ENCODE measurements at regions of chr3 and their contacts with region 1.

Region 1: DNA sequence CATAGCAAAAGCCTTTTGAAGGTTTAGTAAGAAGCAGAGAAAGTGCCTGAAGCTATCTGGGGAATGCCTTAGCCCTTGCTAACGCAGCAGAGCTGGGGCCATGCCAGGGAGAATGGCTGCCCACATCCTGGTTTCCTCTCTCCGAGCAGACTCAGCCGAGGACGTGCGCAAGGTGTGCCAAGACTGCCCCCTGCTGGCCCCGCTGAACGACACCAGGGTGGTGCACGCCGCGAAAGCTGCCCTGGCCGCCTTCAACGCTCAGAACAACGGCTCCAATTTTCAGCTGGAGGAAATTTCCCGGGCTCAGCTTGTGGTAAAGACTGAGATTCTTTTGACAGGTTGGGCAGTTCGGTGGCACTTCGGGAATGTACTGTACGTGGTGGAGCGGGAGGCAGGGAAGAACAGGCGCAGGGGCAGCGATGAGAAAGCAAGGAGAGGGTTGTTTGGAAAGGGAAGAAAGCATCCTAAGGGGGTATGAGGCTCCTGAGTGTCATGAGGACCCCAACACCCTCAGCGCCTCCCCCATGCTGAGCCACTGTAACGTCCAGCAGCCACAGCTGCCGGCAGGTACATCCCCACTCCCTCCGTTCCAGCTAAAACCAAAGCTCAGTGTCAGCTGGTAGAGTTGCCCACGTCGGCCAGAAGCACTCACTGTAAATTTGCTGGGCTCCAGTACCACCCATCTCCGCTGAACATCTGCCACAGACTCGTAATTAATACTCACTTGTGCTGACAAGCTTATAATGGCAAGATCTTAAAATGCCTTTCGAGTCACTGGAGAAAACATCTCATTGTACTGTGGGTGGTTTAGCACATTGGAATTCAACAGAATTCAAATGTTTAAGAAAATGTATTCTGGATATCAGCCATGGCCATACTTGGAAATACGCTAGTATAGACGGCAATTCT is 4.4 kb downstream of the AHSG start:
- DNase-seq: peak; percentile 97
- H3K4me3 Mint-ChIP-seq: peak overlapping the region; percentile 56
- H3K27ac Mint-ChIP-seq: peak overlapping the region; percentile 81
- H3K4me1 Mint-ChIP-seq: peaks cover 18% of the 10 kb centered on the region
- H3K27me3 Mint-ChIP-seq: peaks cover 16% of the 10 kb centered on the region

Region 2: DNA sequence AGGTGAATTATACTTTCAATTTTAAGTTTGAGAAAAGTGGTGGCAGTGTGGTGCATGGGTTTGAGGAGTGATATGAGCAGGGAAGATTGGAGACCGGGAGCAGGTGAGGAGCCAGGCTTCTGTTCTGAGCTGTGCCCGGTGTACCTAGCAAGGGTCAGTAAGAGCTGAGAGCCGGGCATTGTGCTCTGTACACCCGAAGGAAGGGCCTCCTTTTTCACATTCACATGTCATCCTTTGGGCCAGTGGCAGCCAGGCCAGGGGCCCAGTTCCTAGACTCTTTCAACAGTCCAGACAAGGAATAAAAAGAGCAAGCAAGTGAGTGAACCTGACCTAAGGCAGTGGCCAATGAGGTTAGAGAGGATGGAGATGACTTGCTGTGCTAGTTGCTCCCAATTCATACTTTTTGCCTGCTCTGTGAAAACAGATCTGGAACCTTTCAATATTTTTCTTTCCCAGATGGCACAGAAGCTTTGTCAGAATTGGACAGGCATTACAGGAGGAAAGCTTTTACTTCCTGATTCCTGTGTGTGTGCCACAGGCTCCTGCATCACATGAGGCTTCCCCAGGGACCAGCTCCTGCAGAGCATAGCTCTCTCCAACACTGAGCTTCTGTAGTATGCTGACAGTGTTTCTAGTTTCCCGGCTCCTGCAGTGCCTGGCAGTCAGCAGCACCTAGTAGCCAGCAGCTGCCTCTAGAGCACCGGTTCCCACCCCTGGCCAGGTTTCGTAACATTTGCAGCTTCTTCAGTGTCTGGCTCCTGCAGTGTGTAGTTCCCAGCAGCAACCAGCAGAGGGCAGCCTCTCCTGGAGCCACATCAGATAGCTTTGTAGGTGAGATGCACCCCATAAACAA is 674.2 kb before region 1 on chr3:
- CTCF ChIA-PET with region 1: interaction called, 29 read pairs
- intact Hi-C with region 1: loop called (anchors 2 kb)
- DNase-seq: peak; percentile 92
- H3K4me3 Mint-ChIP-seq: peak overlapping the region; percentile 28
- H3K27ac Mint-ChIP-seq: no peak overlapping the region
- H3K4me1 Mint-ChIP-seq: peaks cover 17% of the 10 kb centered on the region
- H3K27me3 Mint-ChIP-seq: no peaks in the 10 kb centered on the region

Region 3: GRCh38 chr3:186241910-186242821 is 375.1 kb before region 1 on chr3:
- CTCF ChIA-PET with region 1: interaction called, 6 read pairs
- intact Hi-C with region 1: loop called (anchors 5 kb)
- DNase-seq: peak; percentile 87
- H3K4me3 Mint-ChIP-seq: peak overlapping the region; percentile 17
- H3K27ac Mint-ChIP-seq: no peak overlapping the region
- H3K4me1 Mint-ChIP-seq: peaks cover 7% of the 10 kb centered on the region
- H3K27me3 Mint-ChIP-seq: peaks cover 7% of the 10 kb centered on the region

Region 4: GRCh38 chr3:186570096-186570940 is 47.0 kb before region 1 on chr3 and contains the start of gene DNAJB11:
- CTCF ChIA-PET with region 1: interaction called, 12 read pairs
- intact Hi-C with region 1: loop called (anchors 1 kb)
- DNase-seq: peak; percentile 100
- H3K4me3 Mint-ChIP-seq: peak within 1 kb of the TSS; percentile 95
- H3K27ac Mint-ChIP-seq: peak within 1 kb of the TSS; percentile 85
- H3K4me1 Mint-ChIP-seq: peaks cover 53% of the 10 kb centered on the region
- H3K27me3 Mint-ChIP-seq: no peaks in the 10 kb centered on the region
- total RNA-seq, gene DNAJB11: 30.0 to 30.5 TPM

Region 5: GRCh38 chr3:186640473-186640818 is 23.2 kb after region 1 on chr3:
- CTCF ChIA-PET with region 1: interaction called, 11 read pairs
- intact Hi-C with region 1: loop called (anchors 1 kb)
- DNase-seq: no peak
- H3K4me3 Mint-ChIP-seq: no peak overlapping the region
- H3K27ac Mint-ChIP-seq: no peak overlapping the region
- H3K4me1 Mint-ChIP-seq: peaks cover 24% of the 10 kb centered on the region
- H3K27me3 Mint-ChIP-seq: peaks cover 6% of the 10 kb centered on the region

Region 6: GRCh38 chr3:186806089-186807055 is 189.1 kb after region 1 on chr3 and contains the start of gene RFC4:
- CTCF ChIA-PET with region 1: interaction called, 4 read pairs
- intact Hi-C with region 1: loop called (anchors 1 kb)
- DNase-seq: peak; percentile 92
- H3K4me3 Mint-ChIP-seq: peak within 1 kb of the TSS; percentile 91
- H3K27ac Mint-ChIP-seq: peak within 1 kb of the TSS; percentile 94
- H3K4me1 Mint-ChIP-seq: peaks cover 19% of the 10 kb centered on the region
- H3K27me3 Mint-ChIP-seq: no peaks in the 10 kb centered on the region
- total RNA-seq, gene RFC4: 135 to 136 TPM

Measured in activated naive CD4-positive, alpha-beta T cell treated with anti-CD3 and anti-CD28 coated beads for 36 hours (primary cell).